Heart right ventricle (tissue), 16 donors: ENCODE measurements at regions of chr12 and their contacts with region 1.

Region 1: GRCh38 chr12:130041983-130042812 is 120.1 kb upstream of the FZD10 start:
- DNase-seq: peak in 1 of 2 donors; percentile 37
- ATAC-seq: peak in 1 of 8 donors; percentile 25
- H3K4me3 ChIP-seq: no peak overlapping the region
- H3K27ac ChIP-seq: no peak overlapping the region
- H3K4me1 ChIP-seq: no peaks in the 10 kb centered on the region
- H3K27me3 ChIP-seq: peaks cover 14 to 94% (median 76%) of the 10 kb centered on the region in 7 donors
- CTCF ChIP-seq: peak; percentile 42 to 80 (median 72)

Region 2: DNA sequence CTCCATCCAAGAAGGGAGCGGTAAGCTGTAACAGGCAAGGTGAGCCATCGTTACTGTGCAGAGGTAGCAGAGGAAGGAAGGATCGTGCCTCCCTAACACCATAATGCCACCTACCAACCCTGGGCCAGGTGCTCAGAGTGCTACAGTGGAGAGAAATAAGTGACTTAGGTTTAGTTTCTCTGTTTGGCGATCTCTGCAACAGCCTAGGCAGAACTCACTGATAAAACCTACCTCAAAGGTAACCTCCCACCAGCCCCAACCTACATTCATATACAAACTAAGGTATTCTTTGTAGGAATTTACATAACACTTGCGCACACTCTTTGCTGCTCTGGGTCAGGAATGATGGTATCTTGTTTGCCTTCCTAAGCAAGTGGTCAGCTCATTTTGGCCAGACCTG is 45.0 kb before region 1 on chr12:
- intact Hi-C with region 1: no loop called
- DNase-seq: no peak
- ATAC-seq: no peak
- H3K4me3 ChIP-seq: no peak overlapping the region
- H3K27ac ChIP-seq: no peak overlapping the region
- H3K4me1 ChIP-seq: no peaks in the 10 kb centered on the region
- H3K27me3 ChIP-seq: peaks cover 0 to 11% (median 2%) of the 10 kb centered on the region in 7 donors
- CTCF ChIP-seq: no peak

Region 3: DNA sequence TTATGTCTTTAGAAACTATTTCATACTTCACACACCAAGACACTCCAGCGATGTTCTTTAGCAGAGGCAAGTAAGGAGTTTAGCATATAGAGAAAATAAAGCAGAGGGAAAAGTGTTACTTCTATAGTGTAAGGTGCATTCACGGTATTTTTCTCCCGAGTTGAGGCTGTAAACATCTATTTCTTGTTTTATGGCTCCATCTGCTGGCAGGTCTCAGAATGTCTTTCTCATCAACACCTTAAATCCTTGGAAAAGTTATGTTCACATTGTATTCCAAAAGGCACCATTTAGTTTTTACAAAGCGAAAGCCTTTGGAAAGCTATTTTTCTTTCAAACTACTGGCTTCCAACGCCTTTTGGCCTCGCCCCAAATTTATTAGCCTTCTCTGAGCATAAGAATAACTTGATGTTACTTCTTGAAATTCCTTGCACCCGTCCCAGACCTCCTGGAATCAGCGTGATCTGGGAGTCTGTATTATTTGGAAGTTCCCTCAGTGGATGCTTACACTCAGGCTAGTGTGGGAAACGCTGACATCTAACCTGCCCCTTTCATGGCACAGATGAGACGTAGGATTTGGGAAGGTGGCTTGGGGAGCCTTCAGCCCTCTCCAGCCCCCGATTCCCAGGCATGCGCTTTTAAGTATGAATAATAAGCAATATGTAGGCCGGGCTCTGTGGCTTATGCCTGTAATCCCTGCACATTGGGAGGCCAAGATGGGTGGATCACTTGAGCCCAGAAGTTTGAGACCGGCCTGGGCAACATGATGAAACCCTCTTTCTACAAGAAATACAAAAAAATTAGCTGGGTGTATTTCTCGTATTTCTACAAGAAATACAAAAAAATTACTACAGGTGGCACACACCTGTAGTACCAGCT is 293.6 kb after region 1 on chr12:
- intact Hi-C with region 1: loop called in 8 of 10 experiments (anchors 1 to 5 kb)
- DNase-seq: peak in 1 of 2 donors; percentile 46
- ATAC-seq: peak in 1 of 8 donors; percentile 68
- H3K4me3 ChIP-seq: no peak overlapping the region
- H3K27ac ChIP-seq: no peak overlapping the region
- H3K4me1 ChIP-seq: peaks cover 0 to 7% (median 0%) of the 10 kb centered on the region in 9 donors
- H3K27me3 ChIP-seq: peaks cover 5 to 68% (median 31%) of the 10 kb centered on the region in 7 donors
- CTCF ChIP-seq: peak; percentile 48 to 82 (median 72)

Region 4: DNA sequence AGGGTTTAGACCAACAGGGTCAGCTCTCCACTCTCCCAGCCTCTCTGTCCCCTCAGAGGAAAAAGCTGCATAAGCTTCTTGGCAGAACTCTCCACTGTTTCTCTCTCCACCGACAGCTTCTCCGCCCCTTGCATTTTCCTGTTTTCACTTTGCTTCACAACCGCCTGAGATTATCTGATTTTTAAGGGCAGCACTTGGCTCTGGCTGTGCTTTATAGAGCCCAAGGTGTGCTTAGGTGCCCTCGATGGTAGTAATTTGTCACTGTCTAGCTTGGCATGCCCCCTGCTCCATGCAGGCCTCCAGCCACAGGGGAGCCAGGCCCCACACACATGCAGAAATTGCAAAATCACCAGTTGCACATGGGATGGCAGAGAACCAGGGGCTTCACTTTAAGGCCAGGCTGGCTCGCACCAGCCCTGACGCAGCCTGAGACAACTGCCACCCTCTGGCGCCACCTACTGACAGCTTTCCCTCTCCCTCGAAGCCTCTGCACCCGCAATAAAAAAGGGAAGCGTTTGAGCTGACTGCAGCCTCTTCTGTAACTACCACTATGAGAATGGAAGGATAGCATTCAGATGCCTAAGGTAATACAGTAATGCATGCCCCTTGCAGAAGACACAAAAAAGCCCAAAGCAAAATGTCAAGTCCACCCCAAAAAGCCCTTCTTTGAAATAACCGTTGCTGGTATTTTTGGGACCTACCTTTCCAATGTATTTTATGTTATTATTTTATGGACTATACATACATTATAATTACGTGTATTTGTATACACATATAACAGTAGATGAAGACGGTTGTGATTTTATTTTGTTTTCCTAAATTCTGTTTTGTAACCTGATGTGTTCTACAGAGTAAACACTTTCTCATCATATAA is 705.9 kb after region 1 on chr12:
- intact Hi-C with region 1: loop called in 7 of 10 experiments (anchors 5 to 10 kb)
- DNase-seq: peak; percentile 75 to 79
- ATAC-seq: peak; percentile 79 to 95 (median 85)
- H3K4me3 ChIP-seq: no peak overlapping the region
- H3K27ac ChIP-seq: no peak overlapping the region
- H3K4me1 ChIP-seq: peaks cover 0 to 4% (median 0%) of the 10 kb centered on the region in 9 donors
- H3K27me3 ChIP-seq: peaks cover 0 to 61% (median 30%) of the 10 kb centered on the region in 7 donors
- CTCF ChIP-seq: peak; percentile 67 to 88 (median 85)

Region 5: GRCh38 chr12:130832561-130833209 is 790.5 kb after region 1 on chr12:
- intact Hi-C with region 1: no loop called
- DNase-seq: no peak
- ATAC-seq: peak in 5 of 8 donors; percentile 8 to 71 (median 45)
- H3K4me3 ChIP-seq: no peak overlapping the region
- H3K27ac ChIP-seq: no peak overlapping the region
- H3K4me1 ChIP-seq: peaks cover 0 to 28% (median 6%) of the 10 kb centered on the region in 9 donors
- H3K27me3 ChIP-seq: no peaks in the 10 kb centered on the region
- CTCF ChIP-seq: no peak